ENCODE measurements at regions of chr1 and their contacts with region 1.

Region 1: DNA sequence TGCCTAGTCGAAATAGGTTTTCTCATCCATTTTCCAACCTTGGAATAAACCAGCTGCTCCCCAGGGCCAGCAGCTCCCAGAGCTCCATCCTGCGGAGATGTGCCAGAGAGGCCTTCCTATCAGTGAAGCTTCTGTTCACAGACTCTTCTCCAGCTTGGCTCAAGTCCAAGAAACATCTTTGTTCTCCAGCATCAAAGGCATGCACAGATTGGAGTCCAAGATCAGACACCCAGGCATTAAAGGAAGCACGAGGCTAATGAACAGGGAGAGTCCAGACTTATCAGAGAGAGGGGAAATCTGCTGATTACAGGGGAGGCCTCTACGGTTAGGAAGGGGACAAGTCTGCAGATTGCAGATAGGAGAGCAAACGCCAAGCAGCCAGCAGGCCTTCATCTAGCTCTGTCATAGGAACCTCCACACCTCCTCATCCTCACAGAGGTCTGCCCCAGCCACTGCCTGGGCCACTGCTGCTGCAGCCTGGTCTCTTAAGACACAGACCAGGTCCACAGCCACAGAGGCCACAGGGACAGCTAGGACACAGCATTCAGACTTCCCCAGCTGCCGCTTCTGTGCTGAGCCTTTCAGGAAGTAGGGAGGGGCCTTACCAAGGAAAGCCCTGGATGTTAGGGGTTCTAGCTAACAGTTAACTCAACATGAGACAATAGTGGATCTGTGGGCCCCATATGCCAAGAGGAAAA is 3.4 kb downstream of the PRR9 start:
- DNase-seq: no peak
- ATAC-seq: no peak
- H3K4me3 ChIP-seq: no peak overlapping the region
- H3K27ac ChIP-seq: no peak overlapping the region
- H3K4me1 ChIP-seq: no peaks in the 10 kb centered on the region
- H3K27me3 ChIP-seq: no peaks in the 10 kb centered on the region

Region 2: GRCh38 chr1:152869808-152870419 is 350.8 kb before region 1 on chr1:
- intact Hi-C with region 1: loop called in 3 of 4 experiments (anchors 5 to 10 kb)
- DNase-seq: peak; percentile 49 to 77 (median 53)
- ATAC-seq: peak in 1 of 2 donors; percentile 55
- H3K4me3 ChIP-seq: no peak overlapping the region
- H3K27ac ChIP-seq: no peak overlapping the region
- H3K4me1 ChIP-seq: no peaks in the 10 kb centered on the region
- H3K27me3 ChIP-seq: no peaks in the 10 kb centered on the region

Region 3: DNA sequence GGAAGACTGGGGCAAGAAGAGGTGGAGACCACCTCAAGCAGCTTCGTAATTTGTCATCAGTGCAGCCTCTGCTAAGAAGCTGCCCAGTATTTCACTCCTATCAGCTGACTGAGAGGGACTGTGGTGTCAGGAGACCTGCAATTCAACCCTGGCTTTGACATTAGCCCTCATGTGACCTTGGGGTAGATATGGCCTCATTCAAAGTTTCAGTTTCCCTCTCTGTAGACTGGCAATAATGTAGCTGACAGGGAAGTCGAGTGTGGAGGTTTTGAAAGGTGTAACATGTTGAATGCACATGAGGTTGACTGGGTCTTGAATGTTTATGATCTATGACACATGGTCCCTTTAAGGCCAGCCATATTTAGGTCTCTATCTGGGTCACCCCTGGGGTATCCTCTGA is 252.5 kb before region 1 on chr1:
- intact Hi-C with region 1: no loop called
- DNase-seq: no peak
- ATAC-seq: no peak
- H3K4me3 ChIP-seq: no peak overlapping the region
- H3K27ac ChIP-seq: no peak overlapping the region
- H3K4me1 ChIP-seq: no peaks in the 10 kb centered on the region
- H3K27me3 ChIP-seq: no peaks in the 10 kb centered on the region

Region 4: GRCh38 chr1:154006136-154006535 is 785.4 kb after region 1 on chr1:
- intact Hi-C with region 1: no loop called
- DNase-seq: no peak
- ATAC-seq: peak in 1 of 2 donors; percentile 45
- H3K4me3 ChIP-seq: no peak overlapping the region
- H3K27ac ChIP-seq: no peak overlapping the region
- H3K4me1 ChIP-seq: no peaks in the 10 kb centered on the region
- H3K27me3 ChIP-seq: no peaks in the 10 kb centered on the region